Gastrocnemius medialis (tissue), 4 donors: ENCODE measurements at regions of chr15 and their contacts with region 1.

Region 1: DNA sequence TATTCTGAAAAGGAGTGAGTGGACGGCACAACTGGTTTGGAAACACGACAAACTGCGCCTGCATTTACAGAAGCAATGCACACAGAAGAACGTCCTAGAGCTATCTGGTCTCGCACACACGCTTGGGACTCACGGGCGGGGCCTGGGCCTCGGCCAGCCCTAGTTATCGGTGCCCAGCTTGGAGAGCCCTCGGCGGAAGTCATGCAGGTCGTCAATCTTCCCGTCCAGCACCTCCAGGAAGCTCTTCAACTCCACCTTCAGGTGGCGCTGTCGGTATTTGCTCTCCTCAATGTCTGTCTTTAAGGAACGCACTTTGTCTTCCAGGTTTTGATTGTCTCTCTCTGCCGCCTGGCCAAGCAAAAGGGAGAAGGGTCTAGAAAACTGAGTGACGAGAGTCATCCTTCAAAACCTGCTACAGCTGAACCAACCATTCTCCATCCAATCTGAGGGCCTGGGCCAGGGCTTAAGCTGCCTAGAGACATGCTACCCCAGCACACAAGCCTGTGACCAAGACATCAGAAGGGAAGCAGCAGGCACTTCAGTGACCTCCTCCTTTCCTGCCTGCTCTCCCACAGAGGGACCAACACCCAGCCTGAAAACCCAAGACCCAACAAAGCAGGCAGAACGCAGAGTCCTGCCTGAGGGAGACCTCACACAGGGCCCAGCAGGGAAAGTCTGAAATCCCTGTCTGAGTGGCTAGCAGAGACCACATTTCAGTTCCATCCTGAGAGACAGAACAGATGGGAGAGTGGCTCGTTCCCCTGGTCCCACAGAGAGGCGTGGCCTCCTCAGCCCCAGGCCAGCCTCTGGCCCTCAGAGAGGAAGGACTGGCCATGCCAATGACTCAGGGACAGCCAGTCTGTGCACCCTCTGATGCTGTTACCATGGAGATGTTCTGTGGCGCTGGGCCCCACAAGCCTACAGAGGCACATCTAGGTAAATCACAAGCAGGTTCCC is 40.4 kb downstream of the WHAMM start:
- DNase-seq: peak; percentile 84 to 91
- ATAC-seq: peak; percentile 95 to 96
- H3K4me3 ChIP-seq: peak overlapping the region in 1 of 4 donors; percentile 13
- H3K27ac ChIP-seq: peak overlapping the region; percentile 51 to 76 (median 62)
- H3K4me1 ChIP-seq: peaks cover 12% of the 10 kb centered on the region in 2 donors
- H3K27me3 ChIP-seq: no peaks in the 10 kb centered on the region
- CTCF ChIP-seq: peak; percentile 68 to 83 (median 79)
- POLR2A ChIP-seq: no peak

Region 2: DNA sequence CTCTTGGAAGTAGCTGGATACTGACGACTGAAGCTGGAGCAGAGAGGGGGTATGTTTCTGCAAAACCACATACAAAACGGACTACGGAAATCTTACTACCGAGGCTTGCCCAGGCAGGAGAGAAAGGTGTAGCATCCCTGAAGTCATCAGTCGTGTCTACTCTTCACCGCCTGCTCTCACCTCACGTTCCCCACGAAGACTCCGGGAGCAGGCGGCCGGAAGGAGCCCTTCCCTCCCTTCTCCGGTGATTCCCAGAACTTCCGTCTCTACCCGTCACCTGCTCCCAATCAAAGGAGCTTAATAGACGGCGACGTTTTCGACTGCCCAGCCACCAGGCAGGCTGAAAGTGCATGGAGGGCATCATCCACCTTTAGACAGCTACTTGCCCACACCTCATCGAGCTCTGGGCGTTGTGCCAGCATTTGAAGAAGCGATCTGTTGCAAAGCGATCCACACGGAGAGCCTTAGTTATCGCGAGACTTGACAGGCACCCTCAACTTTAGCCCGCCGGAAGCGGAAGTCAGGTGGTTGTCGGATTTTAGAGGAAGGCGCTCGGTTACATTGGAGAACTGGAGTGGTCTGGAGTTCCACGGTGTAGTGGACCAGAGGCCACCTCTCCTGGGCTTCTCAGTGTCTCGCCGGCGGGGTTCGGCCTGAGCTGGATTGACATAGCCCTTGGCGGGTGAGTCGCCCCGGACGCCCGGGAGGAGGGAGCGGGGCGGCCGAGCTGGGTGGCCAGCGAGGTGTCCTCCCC is 136.0 kb after region 1 on chr15 and contains the start of gene RAMAC:
- in situ Hi-C with region 1: no loop called
- intact Hi-C with region 1: loop called (anchors 1 kb)
- DNase-seq: peak; percentile 89 to 93
- ATAC-seq: peak; percentile 98 to 99
- H3K4me3 ChIP-seq: peak within 1 kb of the TSS; percentile 73 to 89 (median 77)
- H3K27ac ChIP-seq: peak within 1 kb of the TSS; percentile 81 to 90 (median 84)
- H3K4me1 ChIP-seq: peaks cover 13 to 19% of the 10 kb centered on the region in 2 donors
- H3K27me3 ChIP-seq: no peaks in the 10 kb centered on the region
- CTCF ChIP-seq: no peak
- POLR2A ChIP-seq: peak; percentile 62 to 79
- total RNA-seq, gene RAMAC: 16.4 to 28.0 (median 23.7) TPM

Region 3: GRCh38 chr15:82999905-83000671 is 150.3 kb after region 1 on chr15:
- in situ Hi-C with region 1: loop called (anchors 5 to 10 kb)
- intact Hi-C with region 1: loop called (anchors 1 kb)
- DNase-seq: no peak
- ATAC-seq: peak; percentile 96
- H3K4me3 ChIP-seq: peak overlapping the region in 2 of 4 donors; percentile 11 to 19
- H3K27ac ChIP-seq: peak overlapping the region; percentile 38 to 68 (median 52)
- H3K4me1 ChIP-seq: peaks cover 0 to 7% of the 10 kb centered on the region in 2 donors
- H3K27me3 ChIP-seq: no peaks in the 10 kb centered on the region
- CTCF ChIP-seq: peak; percentile 37 to 68 (median 53)
- POLR2A ChIP-seq: no peak